Right ventricle myocardium inferior (tissue), 1 donor: ENCODE measurements at regions of chr2 and their contacts with region 1.

Region 1: GRCh38 chr2:27016801-27017325 is 15.9 kb upstream of the TMEM214 start:
- DNase-seq: no peak
- ATAC-seq: peak; percentile 8

Region 2: DNA sequence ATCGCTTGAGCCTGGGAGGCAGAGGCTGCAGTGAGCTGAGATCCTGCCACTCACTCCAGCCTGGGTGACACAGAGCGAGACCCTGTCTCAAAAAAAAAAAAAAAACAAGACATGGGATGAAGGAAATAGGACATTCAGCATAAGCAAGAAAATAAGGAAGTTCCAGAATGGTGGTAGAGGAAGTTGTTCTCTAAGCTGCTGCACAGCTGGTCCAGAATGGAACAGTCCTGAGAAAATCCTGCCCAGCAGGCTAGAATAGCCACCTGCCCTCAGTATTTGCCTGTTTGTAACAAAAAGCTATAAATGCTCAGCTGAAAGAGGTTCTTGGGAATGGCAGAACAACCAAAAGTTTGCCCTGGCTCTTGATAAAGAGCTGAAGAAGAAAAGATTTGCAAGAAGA is 57.5 kb before region 1 on chr2:
- intact Hi-C with region 1: loop called (anchors 1 kb)
- DNase-seq: no peak
- ATAC-seq: peak; percentile 57